Naive thymus-derived CD8-positive, alpha-beta T cell (primary cell): ENCODE measurements at regions of chr15 and their contacts with region 1.

Region 1: GRCh38 chr15:100349696-100350433 is 8.1 kb upstream of the ADAMTS17 start:
- DNase-seq: peak; percentile 71 to 91 (median 82)
- ATAC-seq: peak; percentile 95 to 97
- H3K4me3 Mint-ChIP-seq: peak overlapping the region; percentile 88 to 97 (median 92)
- H3K27ac Mint-ChIP-seq: peak overlapping the region; percentile 77 to 97 (median 90)
- H3K4me1 Mint-ChIP-seq: peaks cover 9 to 13% (median 11%) of the 10 kb centered on the region in 4 donors
- H3K27me3 Mint-ChIP-seq: peaks cover 11 to 29% (median 16%) of the 10 kb centered on the region in 5 donors

Region 2: GRCh38 chr15:100572362-100572983 is 222.6 kb after region 1 on chr15:
- POLR2A ChIA-PET with region 1: interaction called, 16 read pairs
- DNase-seq: peak in 3 of 10 donors; percentile 33 to 47 (median 46)
- ATAC-seq: peak; percentile 42 to 50
- H3K4me3 Mint-ChIP-seq: peak overlapping the region in 7 of 10 donors; percentile 66 to 80 (median 71)
- H3K27ac Mint-ChIP-seq: peak overlapping the region in 9 of 10 donors; percentile 35 to 97 (median 92)
- H3K4me1 Mint-ChIP-seq: peaks cover 28 to 59% (median 55%) of the 10 kb centered on the region in 4 donors
- H3K27me3 Mint-ChIP-seq: no peaks in the 10 kb centered on the region